ENCODE measurements at regions of chr1 and their contacts with region 1.

Region 1: GRCh38 chr1:89022167-89022959 is at the start of gene GBP3:
- DNase-seq: peak; percentile 54
- ATAC-seq: peak; percentile 81
- H3K4me3 ChIP-seq: peak within 1 kb of the TSS; percentile 29 to 55
- H3K27ac ChIP-seq: peak within 1 kb of the TSS; percentile 32
- H3K4me1 ChIP-seq: no peaks in the 10 kb centered on the region
- H3K27me3 ChIP-seq: no peaks in the 10 kb centered on the region
- CTCF ChIP-seq: no peak
- total RNA-seq, gene GBP3: 2.5 TPM

Region 2: DNA sequence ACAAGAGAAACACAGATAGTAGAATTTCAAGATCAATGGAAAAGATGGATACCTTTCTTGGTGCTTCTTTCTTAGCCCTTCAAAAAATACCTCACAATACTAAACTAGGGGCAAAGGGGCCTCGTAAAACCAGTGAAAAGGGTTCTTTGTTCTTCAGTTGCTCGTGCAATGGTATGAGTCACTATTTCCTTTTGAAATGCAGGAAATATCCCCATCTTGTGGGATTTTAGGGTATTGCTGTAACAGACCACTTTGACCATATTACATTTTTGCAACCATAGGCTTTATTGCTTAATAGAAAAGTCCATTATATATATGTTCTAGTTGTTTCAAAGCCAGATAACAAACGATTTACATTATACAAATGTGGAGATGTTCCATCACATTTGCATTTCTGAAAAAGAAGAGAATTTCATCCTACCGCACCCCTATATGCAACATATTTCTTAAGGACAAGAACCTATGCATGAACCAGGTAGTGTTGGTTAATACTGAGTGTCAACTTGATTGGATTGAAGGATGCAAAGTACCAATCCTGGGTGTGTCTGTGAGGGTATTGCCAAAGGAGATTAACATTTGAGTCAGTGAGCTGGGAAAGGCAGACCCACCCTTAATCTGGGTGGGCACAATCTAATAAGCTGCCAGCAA is 426.9 kb before region 1 on chr1:
- CTCF ChIA-PET with region 1: interaction called, 10 read pairs
- POLR2A ChIA-PET with region 1: no interaction called
- in situ Hi-C with region 1: no loop called
- intact Hi-C with region 1: no loop called
- DNase-seq: peak; percentile 27
- ATAC-seq: peak; percentile 75; the same call in 1 of the 2 replicates
- H3K4me3 ChIP-seq: no peak overlapping the region
- H3K27ac ChIP-seq: no peak overlapping the region
- H3K4me1 ChIP-seq: no peaks in the 10 kb centered on the region
- H3K27me3 ChIP-seq: no peaks in the 10 kb centered on the region
- CTCF ChIP-seq: peak; percentile 64; the same call in 1 of the 2 replicates

Region 3: DNA sequence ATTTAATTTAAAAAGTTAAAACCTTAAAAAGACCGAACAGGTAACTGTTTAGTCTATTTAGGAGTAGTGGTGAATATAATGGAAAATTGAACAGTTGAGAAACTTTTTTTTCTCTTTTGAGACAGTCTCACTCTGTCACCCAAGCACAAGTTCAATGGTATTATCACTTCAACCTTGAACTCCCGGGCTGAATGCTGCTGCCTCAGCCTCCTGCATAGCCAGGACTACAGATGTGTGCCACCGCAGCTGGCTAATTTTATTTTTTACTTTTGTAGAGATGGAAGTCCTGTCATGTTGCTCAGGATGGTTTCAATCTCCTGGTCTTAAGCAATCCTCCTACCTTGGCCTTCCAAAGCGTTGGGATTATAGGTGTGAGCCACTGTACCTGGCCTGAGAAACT is 119.8 kb after region 1 on chr1:
- CTCF ChIA-PET with region 1: no interaction called
- POLR2A ChIA-PET with region 1: no interaction called
- in situ Hi-C with region 1: no loop called
- intact Hi-C with region 1: no loop called
- DNase-seq: no peak
- ATAC-seq: no peak
- H3K4me3 ChIP-seq: no peak overlapping the region
- H3K27ac ChIP-seq: no peak overlapping the region
- H3K4me1 ChIP-seq: no peaks in the 10 kb centered on the region
- H3K27me3 ChIP-seq: no peaks in the 10 kb centered on the region
- CTCF ChIP-seq: no peak